ENCODE measurements at regions of chr12 and their contacts with region 1.

Region 1: DNA sequence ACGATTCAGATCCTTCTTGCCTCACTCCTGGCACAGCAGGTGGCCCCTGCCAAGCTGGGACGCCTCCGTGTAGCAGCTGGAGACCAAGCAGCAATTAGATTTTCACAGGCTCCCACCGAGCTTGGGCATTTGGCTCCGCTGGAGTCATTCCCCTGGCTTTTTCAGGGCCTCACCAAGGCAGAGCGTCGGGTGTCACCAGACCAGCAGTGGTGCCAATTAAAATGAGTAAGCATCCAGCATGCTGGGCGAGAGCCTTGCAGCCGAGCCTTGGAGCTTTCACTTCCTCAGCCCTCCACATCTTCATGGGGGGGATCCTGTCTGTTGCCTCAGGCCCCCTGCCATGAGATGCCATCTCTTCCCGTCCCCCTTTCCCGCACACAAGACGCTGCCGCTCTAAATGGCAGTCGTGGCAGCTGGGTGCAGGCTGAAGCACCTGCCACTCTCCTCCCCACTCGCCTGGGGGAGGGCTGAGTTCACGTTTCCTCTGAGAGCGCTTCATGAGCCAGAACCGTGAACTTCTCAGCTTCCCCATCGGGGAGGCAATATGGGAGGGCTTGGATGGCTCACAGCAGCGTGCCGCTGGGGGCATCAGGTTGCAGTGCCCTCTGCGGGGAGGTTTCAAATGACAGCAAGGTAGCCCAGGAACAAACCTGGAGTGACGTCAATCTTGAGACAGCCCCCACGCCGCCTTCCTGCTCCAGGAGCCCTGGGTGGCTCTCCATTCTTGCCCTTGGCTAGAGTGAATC is 11.7 kb downstream of the TPCN1 start:
- DNase-seq: peak in 7 of 10 donors; percentile 45 to 91 (median 55)

Region 2: GRCh38 chr12:113299619-113300237 is 66.7 kb after region 1 on chr12:
- intact Hi-C with region 1: loop called (anchors 10 kb)
- DNase-seq: peak in 3 of 10 donors; percentile 42 to 53 (median 53)